Posterior vena cava (tissue), 2 donors: ENCODE measurements at regions of chr7 and their contacts with region 1.

Region 1: GRCh38 chr7:80563561-80564327 is 51.9 kb upstream of the GNAT3 start:
- DNase-seq: peak; percentile 69

Region 2: DNA sequence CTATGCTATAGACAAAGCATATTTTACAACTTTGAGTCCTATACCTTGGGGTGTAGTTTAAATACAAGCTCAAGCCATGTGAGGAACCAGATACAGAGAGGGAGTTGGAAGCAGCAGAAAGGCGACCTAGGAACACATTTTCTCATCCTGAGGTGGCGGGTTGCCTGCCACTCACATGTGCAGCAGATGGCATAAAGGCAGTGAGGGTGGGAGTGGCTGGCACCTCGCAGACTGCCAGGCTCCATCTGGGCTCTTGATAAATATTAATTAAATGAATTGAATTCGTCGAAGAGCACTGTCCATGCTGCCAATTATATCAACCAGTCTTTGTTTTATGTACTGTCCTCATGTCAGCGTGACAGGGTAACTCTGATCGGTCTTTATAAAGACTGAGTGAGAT is 434.1 kb after region 1 on chr7:
- intact Hi-C with region 1: loop called in 1 of 2 experiments (anchors 10 kb)
- DNase-seq: no peak